ENCODE measurements at regions of chr4 and their contacts with region 1.

Region 1: DNA sequence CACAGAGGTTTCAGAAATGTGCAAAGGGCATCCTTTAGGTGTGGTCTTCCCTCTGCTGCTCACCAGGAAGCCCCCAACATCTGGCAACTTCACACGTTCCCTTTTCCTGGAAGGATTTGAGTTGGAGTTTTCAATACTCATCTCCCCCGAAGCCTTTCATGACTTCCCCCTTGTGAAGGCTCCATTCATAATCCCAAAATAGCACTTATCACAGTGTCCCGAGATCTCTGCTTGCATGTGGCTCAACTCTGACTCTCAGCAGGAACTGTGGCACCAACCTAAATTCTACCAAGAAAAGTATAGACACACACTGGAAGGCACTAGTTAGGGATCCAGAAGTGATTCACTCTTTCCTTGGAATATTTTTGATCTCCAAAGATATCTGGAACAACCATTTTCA is 40.5 kb upstream of the ZNF827 start:
- DNase-seq: no peak
- H3K4me3 ChIP-seq: no peak overlapping the region
- H3K27ac ChIP-seq: peak overlapping the region in 1 of 2 donors; percentile 40
- H3K4me1 ChIP-seq: peaks cover 2% of the 10 kb centered on the region
- H3K27me3 ChIP-seq: no peaks in the 10 kb centered on the region
- CTCF ChIP-seq: no peak
- POLR2A ChIP-seq: no peak

Region 2: DNA sequence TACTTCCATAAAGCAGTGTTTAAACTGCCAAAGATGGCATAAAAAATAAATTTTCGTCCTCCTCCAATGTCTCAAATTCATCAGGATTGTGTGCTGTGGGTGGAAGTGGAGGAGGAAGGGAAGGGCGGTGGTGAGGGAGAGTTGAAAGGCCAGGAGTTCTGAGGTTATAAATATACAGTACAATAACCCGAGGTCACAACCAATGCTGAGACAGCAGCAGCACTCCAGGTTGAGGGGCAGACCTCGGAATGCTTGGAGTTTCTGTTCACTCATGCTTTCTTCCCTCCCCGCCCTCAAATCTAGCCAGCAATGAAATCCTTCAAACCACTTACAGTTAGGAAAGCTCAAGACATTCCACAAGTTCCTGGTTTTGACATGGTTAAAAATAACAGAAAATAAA is 631.5 kb before region 1 on chr4:
- intact Hi-C with region 1: no loop called
- DNase-seq: no peak
- H3K4me3 ChIP-seq: no peak overlapping the region
- H3K27ac ChIP-seq: no peak overlapping the region
- H3K4me1 ChIP-seq: no peaks in the 10 kb centered on the region
- H3K27me3 ChIP-seq: no peaks in the 10 kb centered on the region
- CTCF ChIP-seq: no peak
- POLR2A ChIP-seq: no peak

Region 3: GRCh38 chr4:145851511-145852201 is 127.5 kb before region 1 on chr4:
- intact Hi-C with region 1: no loop called
- DNase-seq: no peak
- H3K4me3 ChIP-seq: no peak overlapping the region
- H3K27ac ChIP-seq: no peak overlapping the region
- H3K4me1 ChIP-seq: no peaks in the 10 kb centered on the region
- H3K27me3 ChIP-seq: no peaks in the 10 kb centered on the region
- CTCF ChIP-seq: no peak
- POLR2A ChIP-seq: no peak

Region 4: DNA sequence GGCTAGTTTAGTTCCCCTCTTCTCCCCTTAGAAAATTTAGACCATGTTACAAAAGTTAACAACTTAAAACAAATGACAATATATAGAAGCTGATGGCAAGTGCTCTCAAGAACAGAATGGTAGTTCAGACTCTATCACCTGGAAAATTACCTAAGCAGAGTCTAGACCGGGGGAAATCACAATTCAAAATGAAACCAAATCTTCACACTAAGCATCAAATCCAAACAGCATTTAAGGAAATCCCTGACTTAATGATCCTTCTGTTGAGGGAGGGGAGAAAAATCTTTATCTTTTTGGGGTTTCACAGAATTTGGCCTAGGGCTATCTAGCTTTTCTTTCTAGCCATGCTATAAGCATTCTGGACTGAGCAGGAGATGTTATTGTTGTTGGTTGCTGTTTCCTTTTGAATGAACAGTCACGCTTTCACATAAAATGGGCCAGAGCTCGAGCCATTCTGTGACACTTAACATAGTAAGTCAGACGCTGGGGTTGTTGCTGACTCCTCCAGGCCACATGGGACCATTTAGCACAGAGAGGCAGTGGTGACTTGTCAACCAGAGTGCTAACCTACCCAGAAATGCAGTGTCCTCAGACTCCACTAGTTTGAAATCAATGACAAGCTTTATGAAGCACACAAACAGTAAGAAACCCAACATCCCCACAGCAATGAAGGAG is 180.4 kb after region 1 on chr4:
- intact Hi-C with region 1: loop called (anchors 10 kb)
- DNase-seq: no peak
- H3K4me3 ChIP-seq: no peak overlapping the region
- H3K27ac ChIP-seq: no peak overlapping the region
- H3K4me1 ChIP-seq: no peaks in the 10 kb centered on the region
- H3K27me3 ChIP-seq: no peaks in the 10 kb centered on the region
- CTCF ChIP-seq: no peak
- POLR2A ChIP-seq: no peak

Measured in prostate gland (tissue), 2 donors.